ENCODE measurements at regions of chr12 and their contacts with region 1.

Region 1: GRCh38 chr12:56359851-56360767 is at the start of gene STAT2:
- DNase-seq: peak; percentile 100
- H3K4me3 ChIP-seq: peak within 1 kb of the TSS; percentile 95
- H3K27ac ChIP-seq: peak within 1 kb of the TSS; percentile 53
- H3K4me1 ChIP-seq: peaks cover 39% of the 10 kb centered on the region
- CTCF ChIP-seq: no peak
- total RNA-seq, gene STAT2: 75.3 and 89.0 TPM in 2 replicates

Region 2: DNA sequence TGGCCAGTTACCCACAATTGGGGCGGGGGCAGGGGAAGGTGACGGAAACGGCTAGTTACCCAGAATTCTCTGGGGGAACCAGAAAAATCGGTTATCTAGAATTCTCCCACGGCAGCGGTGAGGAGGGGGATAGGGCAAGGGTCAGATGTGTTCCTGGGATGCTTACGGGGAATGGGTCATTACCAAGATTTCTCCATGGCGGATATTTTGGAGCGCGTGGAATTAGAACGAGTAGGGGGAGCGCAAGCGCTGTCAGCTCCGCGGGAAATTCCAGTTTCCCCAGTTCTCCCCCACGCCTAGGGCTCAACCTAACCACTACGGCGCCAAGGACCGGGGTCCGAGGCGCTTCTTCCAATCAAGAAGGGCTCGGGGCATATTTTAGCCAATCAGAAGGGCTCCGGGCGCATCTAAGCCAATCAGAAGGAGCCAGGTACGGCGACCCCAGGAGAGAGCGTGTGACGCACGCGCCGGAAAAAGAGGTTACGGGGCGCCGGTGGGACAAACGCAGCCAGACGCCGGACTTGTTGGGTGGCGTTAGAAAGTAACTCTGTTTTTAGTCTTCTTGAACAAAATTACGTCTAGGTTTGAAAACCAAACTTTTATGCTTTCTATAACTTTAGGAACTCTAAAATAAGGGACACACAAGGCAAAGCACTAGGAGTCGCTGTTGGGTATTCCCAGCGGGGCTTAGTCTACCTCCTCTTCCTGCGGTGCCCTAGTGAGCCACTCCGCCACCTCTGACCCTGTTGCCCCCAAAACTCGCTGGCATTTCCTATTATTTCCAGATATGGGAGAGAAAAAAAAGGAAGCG is 26.2 kb before region 1 on chr12 and contains the start of gene PAN2:
- CTCF ChIA-PET with region 1: interaction called, 6 read pairs
- POLR2A ChIA-PET with region 1: interaction called, 70 read pairs
- intact Hi-C with region 1: loop called (anchors 2 kb)
- DNase-seq: peak; percentile 99
- H3K4me3 ChIP-seq: peak within 1 kb of the TSS; percentile 95
- H3K27ac ChIP-seq: peak within 1 kb of the TSS; percentile 94
- H3K4me1 ChIP-seq: peaks cover 56% of the 10 kb centered on the region
- CTCF ChIP-seq: peak; percentile 78
- total RNA-seq, gene PAN2: 69.9 and 106 TPM in 2 replicates

Region 3: GRCh38 chr12:56377310-56377988 is 17.3 kb after region 1 on chr12:
- CTCF ChIA-PET with region 1: interaction called, 6 read pairs
- POLR2A ChIA-PET with region 1: interaction called, 116 read pairs
- intact Hi-C with region 1: loop called (anchors 1 kb)
- DNase-seq: peak; percentile 54
- H3K4me3 ChIP-seq: peak overlapping the region; percentile 3
- H3K27ac ChIP-seq: peak overlapping the region; percentile 93
- H3K4me1 ChIP-seq: peaks cover 49% of the 10 kb centered on the region
- CTCF ChIP-seq: peak; percentile 58

Region 4: GRCh38 chr12:56461235-56462159 is 101.4 kb after region 1 on chr12:
- CTCF ChIA-PET with region 1: interaction called, 21 read pairs
- POLR2A ChIA-PET with region 1: interaction called, 34 read pairs
- intact Hi-C with region 1: loop called (anchors 1 kb)
- DNase-seq: no peak
- H3K4me3 ChIP-seq: no peak overlapping the region
- H3K27ac ChIP-seq: peak overlapping the region; percentile 96
- H3K4me1 ChIP-seq: peaks cover 49% of the 10 kb centered on the region
- CTCF ChIP-seq: no peak

Region 5: GRCh38 chr12:56816491-56816890 is 456.4 kb after region 1 on chr12:
- CTCF ChIA-PET with region 1: no interaction called
- POLR2A ChIA-PET with region 1: no interaction called
- intact Hi-C with region 1: no loop called
- DNase-seq: no peak
- H3K4me3 ChIP-seq: no peak overlapping the region
- H3K27ac ChIP-seq: no peak overlapping the region
- H3K4me1 ChIP-seq: no peaks in the 10 kb centered on the region
- CTCF ChIP-seq: no peak